GM12878 (cell line): ENCODE measurements at regions of chr18 and their contacts with region 1.

Region 1: GRCh38 chr18:36095936-36096519 is 28.7 kb upstream of the RPRD1A start:
- DNase-seq: no peak
- ATAC-seq: peak; percentile 76
- H3K4me3 ChIP-seq: no peak overlapping the region
- H3K27ac ChIP-seq: no peak overlapping the region
- H3K4me1 ChIP-seq: no peaks in the 10 kb centered on the region
- H3K27me3 ChIP-seq: no peaks in the 10 kb centered on the region
- CTCF ChIP-seq: peak; percentile 33 to 67 (median 36); a peak in 4 of 6 replicates
- EP300 ChIP-seq: no peak
- POLR2A ChIP-seq: no peak
- RAD21 ChIP-seq: peak; percentile 83

Region 2: GRCh38 chr18:35756506-35757117 is 339.4 kb before region 1 on chr18:
- CTCF ChIA-PET with region 1: interaction called, 6 read pairs
- POLR2A ChIA-PET with region 1: no interaction called
- RAD21 ChIA-PET with region 1: interaction called, 8 read pairs
- SMC1A ChIA-PET with region 1: interaction called, 7 read pairs
- in situ Hi-C with region 1: no loop called
- intact Hi-C with region 1: loop called (anchors 5 kb)
- DNase-seq: no peak
- ATAC-seq: peak; percentile 93
- H3K4me3 ChIP-seq: no peak overlapping the region
- H3K27ac ChIP-seq: no peak overlapping the region
- H3K4me1 ChIP-seq: no peaks in the 10 kb centered on the region
- H3K27me3 ChIP-seq: peaks cover 0 to 2% of the 10 kb centered on the region in 2 experiments; a peak in 2 of 4 replicates
- CTCF ChIP-seq: peak; percentile 51 to 84 (median 53); a peak in 5 of 6 replicates
- EP300 ChIP-seq: no peak
- POLR2A ChIP-seq: no peak
- RAD21 ChIP-seq: peak; percentile 92

Region 3: GRCh38 chr18:36083729-36084128 is 12.3 kb before region 1 on chr18:
- CTCF ChIA-PET with region 1: interaction called, 11 read pairs
- POLR2A ChIA-PET with region 1: interaction called, 3 read pairs
- RAD21 ChIA-PET with region 1: interaction called, 4 read pairs
- SMC1A ChIA-PET with region 1: interaction called, 13 read pairs
- in situ Hi-C with region 1: no loop called
- intact Hi-C with region 1: no loop called
- DNase-seq: no peak
- ATAC-seq: peak; percentile 61
- H3K4me3 ChIP-seq: no peak overlapping the region
- H3K27ac ChIP-seq: no peak overlapping the region
- H3K4me1 ChIP-seq: no peaks in the 10 kb centered on the region
- H3K27me3 ChIP-seq: no peaks in the 10 kb centered on the region
- CTCF ChIP-seq: no peak
- EP300 ChIP-seq: peak in 1 of 2 experiments; percentile 57; a peak in 1 of 4 replicates
- POLR2A ChIP-seq: no peak
- RAD21 ChIP-seq: no peak

Region 4: DNA sequence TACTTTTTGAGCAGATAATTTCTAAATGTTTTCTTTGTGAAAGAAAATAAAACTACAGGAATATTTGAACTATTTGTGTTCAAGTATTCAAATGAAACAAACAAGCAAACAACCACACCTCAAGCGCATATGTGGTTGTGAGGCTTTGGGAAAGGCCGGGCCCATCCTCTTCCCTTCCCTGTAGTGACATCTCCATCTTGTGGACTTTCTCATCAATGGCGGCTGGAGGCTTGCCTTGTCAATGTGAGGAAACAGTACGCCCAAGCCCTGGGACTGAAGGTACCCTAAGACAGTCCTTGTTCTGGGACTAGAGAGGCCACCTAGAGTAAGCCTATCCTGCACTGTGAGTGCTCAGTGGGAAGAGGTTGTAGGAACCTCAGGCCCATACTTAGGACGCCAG is 566.0 kb after region 1 on chr18:
- CTCF ChIA-PET with region 1: no interaction called
- POLR2A ChIA-PET with region 1: no interaction called
- RAD21 ChIA-PET with region 1: no interaction called
- SMC1A ChIA-PET with region 1: no interaction called
- in situ Hi-C with region 1: no loop called
- intact Hi-C with region 1: loop called (anchors 10 kb)
- DNase-seq: no peak
- ATAC-seq: peak; percentile 58
- H3K4me3 ChIP-seq: no peak overlapping the region
- H3K27ac ChIP-seq: no peak overlapping the region
- H3K4me1 ChIP-seq: no peaks in the 10 kb centered on the region
- H3K27me3 ChIP-seq: no peaks in the 10 kb centered on the region
- CTCF ChIP-seq: peak; percentile 35 to 47 (median 43); a peak in 4 of 6 replicates
- EP300 ChIP-seq: no peak
- POLR2A ChIP-seq: no peak
- RAD21 ChIP-seq: peak; percentile 78

Region 5: GRCh38 chr18:36809590-36810381 is 713.8 kb after region 1 on chr18:
- CTCF ChIA-PET with region 1: interaction called, 10 read pairs
- POLR2A ChIA-PET with region 1: no interaction called
- RAD21 ChIA-PET with region 1: interaction called, 3 read pairs
- SMC1A ChIA-PET with region 1: interaction called, 7 read pairs
- in situ Hi-C with region 1: no loop called
- intact Hi-C with region 1: loop called (anchors 2 kb)
- DNase-seq: peak; percentile 27
- ATAC-seq: peak; percentile 99
- H3K4me3 ChIP-seq: no peak overlapping the region
- H3K27ac ChIP-seq: no peak overlapping the region
- H3K4me1 ChIP-seq: no peaks in the 10 kb centered on the region
- H3K27me3 ChIP-seq: no peaks in the 10 kb centered on the region
- CTCF ChIP-seq: peak; percentile 75 to 86 (median 80)
- EP300 ChIP-seq: no peak
- POLR2A ChIP-seq: no peak
- RAD21 ChIP-seq: peak; percentile 78